ENCODE measurements at regions of chr15 and their contacts with region 1.

Region 1: DNA sequence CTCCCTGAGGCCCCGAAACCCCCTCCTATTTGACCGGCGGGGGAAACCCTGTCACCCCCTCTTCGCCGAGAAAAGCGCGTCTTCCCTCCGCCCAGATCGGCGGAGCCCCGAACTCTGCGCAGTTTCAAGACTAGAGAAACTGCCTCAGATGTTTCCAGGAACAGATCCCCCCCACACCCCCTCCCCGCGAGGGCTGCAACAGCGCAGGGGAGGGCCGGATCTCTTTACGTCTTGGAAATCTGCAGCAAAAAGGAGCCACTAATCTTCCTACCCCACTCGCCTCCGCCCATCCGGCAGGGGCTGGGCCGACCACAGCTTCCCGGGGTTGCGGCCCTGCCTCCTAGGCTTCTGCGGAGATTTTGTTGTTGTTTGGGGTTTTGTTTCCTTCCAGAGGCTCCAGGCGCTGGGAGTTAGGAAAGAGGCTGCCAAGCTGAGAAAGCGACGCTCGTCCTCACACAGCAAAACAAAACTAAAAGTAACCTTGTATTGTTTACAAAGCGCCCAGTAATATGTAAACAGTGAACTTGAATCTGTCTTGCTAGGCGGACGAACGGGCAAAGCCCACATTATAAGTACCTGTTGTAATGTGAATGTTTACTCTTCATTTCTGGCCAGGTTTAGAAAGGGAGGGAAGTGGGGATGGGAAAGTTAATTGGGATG is 2.2 kb downstream of the FOXB1 start:
- DNase-seq: peak; percentile 79
- H3K4me3 Mint-ChIP-seq: peak overlapping the region; percentile 97
- H3K27ac Mint-ChIP-seq: peak overlapping the region; percentile 92
- H3K4me1 Mint-ChIP-seq: peaks cover 50% of the 10 kb centered on the region
- H3K27me3 Mint-ChIP-seq: peaks cover 65% of the 10 kb centered on the region
- CTCF ChIP-seq: no peak

Region 2: DNA sequence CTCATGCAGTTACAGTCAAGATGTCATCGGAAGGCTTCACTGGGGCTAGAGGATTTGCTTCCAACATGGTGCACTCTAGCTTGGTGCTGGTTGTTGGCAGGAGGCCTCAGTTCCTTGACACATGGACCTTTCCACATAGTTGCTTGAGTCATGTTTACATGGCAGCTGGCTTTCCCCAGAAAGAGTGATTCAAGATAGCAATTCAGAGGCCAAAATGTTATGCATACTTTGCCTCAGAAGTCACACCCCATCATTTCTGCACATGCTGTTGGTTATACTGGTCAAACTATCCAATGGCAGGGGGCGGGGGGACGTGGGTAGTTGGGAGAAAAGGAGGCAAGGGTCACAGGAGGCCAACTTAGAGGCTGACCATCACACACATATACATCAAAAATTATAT is 56.5 kb after region 1 on chr15:
- CTCF ChIA-PET with region 1: no interaction called
- intact Hi-C with region 1: no loop called
- DNase-seq: no peak
- H3K4me3 Mint-ChIP-seq: no peak overlapping the region
- H3K27ac Mint-ChIP-seq: no peak overlapping the region
- H3K4me1 Mint-ChIP-seq: no peaks in the 10 kb centered on the region
- H3K27me3 Mint-ChIP-seq: peaks cover 36% of the 10 kb centered on the region
- CTCF ChIP-seq: no peak

Region 3: GRCh38 chr15:60079210-60079609 is 72.9 kb after region 1 on chr15:
- CTCF ChIA-PET with region 1: no interaction called
- intact Hi-C with region 1: loop called (anchors 5 kb)
- DNase-seq: peak; percentile 19
- H3K4me3 Mint-ChIP-seq: no peak overlapping the region
- H3K27ac Mint-ChIP-seq: no peak overlapping the region
- H3K4me1 Mint-ChIP-seq: no peaks in the 10 kb centered on the region
- H3K27me3 Mint-ChIP-seq: no peaks in the 10 kb centered on the region
- CTCF ChIP-seq: peak; percentile 27

Region 4: GRCh38 chr15:60128000-60128376 is 121.7 kb after region 1 on chr15:
- CTCF ChIA-PET with region 1: no interaction called
- intact Hi-C with region 1: loop called (anchors 5 kb)
- DNase-seq: no peak
- H3K4me3 Mint-ChIP-seq: peak overlapping the region; percentile 85
- H3K27ac Mint-ChIP-seq: peak overlapping the region; percentile 73
- H3K4me1 Mint-ChIP-seq: peaks cover 24% of the 10 kb centered on the region
- H3K27me3 Mint-ChIP-seq: peaks cover 15% of the 10 kb centered on the region
- CTCF ChIP-seq: no peak

Measured in Calu3 (cell line).